Ascending aorta (tissue), 2 donors: ENCODE measurements at regions of chr15 and their contacts with region 1.

Region 1: DNA sequence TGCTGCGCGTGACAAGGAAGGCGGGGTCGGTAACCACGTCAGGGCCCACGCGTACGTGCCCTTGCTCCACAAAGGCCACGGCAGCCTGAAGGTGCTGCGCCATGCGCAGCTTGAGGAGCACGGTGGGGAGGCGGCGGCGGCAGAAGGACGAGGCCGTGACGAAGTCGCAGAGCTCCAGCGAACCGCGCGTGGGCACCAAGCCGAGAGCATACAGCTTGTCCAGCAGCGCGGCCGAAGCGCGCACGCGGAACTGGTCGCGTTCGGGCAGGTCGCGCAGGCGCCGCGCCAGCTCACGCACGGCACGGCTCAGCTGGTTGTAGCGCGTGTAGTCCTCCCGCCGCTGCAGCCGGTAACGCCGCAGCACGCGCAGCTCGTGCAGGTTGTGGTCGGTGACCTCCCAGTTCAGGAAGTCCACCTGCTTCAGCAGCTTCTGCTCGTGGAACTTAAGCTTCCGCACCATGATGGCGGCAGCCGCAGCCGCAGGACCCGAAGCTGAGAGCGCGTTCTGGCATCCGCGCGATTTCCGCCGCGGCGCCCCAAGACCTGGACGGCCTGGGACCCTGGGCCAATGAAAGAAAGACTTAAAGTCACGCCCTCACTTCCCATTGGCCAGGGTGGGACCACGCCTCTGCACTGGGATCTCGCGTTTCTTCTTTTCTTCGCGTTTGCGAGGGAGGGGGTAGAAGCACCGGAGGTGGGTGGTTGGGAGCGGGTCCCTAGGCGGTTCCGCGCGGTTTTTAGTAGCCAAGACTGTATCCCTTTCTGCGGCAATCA is at the start of gene IMP3:
- DNase-seq: peak; percentile 84 to 97
- H3K4me3 ChIP-seq: peak within 1 kb of the TSS; percentile 82 to 94
- H3K27ac ChIP-seq: peak within 1 kb of the TSS; percentile 88 to 95
- H3K4me1 ChIP-seq: peaks cover 9 to 32% of the 10 kb centered on the region in 2 donors
- H3K27me3 ChIP-seq: no peaks in the 10 kb centered on the region
- CTCF ChIP-seq: no peak
- total RNA-seq, gene IMP3: 159 TPM

Region 2: GRCh38 chr15:74826364-74826819 is 813.5 kb before region 1 on chr15 and contains the start of gene CPLX3:
- intact Hi-C with region 1: no loop called
- DNase-seq: no peak
- H3K4me3 ChIP-seq: no peak within 1 kb of the TSS
- H3K27ac ChIP-seq: no peak within 1 kb of the TSS
- H3K4me1 ChIP-seq: no peaks in the 10 kb centered on the region
- H3K27me3 ChIP-seq: peaks cover 10% of the 10 kb centered on the region
- CTCF ChIP-seq: no peak
- total RNA-seq, gene CPLX3: not detected

Region 3: GRCh38 chr15:75661091-75661777 is 21.3 kb after region 1 on chr15:
- intact Hi-C with region 1: loop called (anchors 1 kb)
- DNase-seq: peak; percentile 66 to 96
- H3K4me3 ChIP-seq: peak overlapping the region in 1 of 2 donors; percentile 42
- H3K27ac ChIP-seq: peak overlapping the region; percentile 95 to 97
- H3K4me1 ChIP-seq: peaks cover 16 to 51% of the 10 kb centered on the region in 2 donors
- H3K27me3 ChIP-seq: no peaks in the 10 kb centered on the region
- CTCF ChIP-seq: no peak

Region 4: DNA sequence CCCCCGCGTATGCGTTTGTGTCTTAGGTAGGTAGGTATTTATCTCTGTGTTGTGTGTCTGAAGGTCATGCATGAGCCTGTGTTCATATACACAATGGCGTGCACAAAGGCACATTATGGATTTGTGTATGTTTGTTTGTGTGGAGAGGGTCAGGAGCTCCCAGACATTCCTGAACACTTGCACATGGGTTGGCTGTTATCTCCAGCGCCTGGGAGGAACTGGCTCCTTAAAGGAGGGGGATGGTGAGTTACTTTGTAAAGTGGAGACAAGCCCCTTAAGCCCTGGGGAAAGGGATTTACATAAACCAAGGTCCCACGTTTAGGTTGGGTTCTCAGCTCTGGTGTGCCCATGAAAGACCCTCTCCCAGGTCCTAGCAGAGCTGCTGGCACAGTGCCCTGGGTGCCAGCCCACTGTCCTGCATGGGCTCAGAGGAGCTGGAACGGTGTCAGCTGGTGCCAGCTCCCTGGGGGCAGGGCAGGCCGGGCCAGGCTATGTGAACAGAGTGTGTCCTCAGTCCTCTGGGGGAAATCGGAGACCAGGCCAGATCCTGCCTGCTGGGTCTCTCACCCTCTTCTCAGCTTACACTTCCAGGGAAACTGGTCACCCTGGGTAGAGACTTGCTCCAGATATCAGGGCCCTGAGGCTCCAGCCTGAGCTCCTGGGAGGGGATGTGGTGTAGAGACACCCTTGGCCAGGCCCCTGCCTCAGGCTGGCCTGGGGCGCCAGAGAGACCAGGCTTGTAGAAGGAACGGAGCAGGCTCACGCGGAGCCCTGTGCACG is 32.9 kb after region 1 on chr15:
- intact Hi-C with region 1: loop called (anchors 5 kb)
- DNase-seq: peak in 1 of 2 donors; percentile 85
- H3K4me3 ChIP-seq: peak overlapping the region in 1 of 2 donors; percentile 33
- H3K27ac ChIP-seq: peak overlapping the region; percentile 95 to 97
- H3K4me1 ChIP-seq: peaks cover 28 to 70% of the 10 kb centered on the region in 2 donors
- H3K27me3 ChIP-seq: no peaks in the 10 kb centered on the region
- CTCF ChIP-seq: no peak

Region 5: DNA sequence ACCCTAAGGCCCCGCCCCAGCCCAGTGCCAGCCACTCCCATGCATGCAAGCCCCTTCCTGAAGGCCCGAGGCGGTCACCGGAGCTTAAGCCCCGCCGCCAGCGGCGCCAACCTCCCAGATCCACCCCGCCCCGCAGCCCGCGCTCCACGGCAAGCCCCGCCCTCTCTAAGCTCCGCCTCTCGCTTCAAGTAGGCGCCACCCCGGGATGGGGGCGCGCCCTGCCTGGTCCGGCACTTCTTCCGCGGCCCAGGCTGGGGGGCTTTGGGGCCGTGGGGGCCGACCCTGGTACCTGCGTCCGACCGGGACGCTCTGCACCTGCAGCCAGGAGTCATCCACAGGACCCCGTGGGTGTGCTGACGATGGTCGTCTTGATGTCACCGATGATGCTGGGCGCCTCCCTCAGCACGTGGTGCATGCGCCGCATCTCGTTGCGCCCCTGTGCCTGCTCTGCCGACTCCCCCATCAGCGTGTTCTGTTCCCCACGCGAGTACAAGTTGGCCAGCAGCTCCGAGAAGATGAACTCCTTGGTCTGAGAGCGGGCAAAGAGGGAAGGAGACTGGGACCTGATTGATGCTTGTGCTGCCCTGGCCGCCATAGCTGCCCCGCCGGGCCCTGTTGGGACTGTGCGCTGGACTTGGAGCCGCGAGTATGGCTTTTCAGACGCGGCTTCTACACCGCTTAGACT is 98.9 kb after region 1 on chr15:
- intact Hi-C with region 1: loop called (anchors 1 kb)
- DNase-seq: peak; percentile 82 to 97
- H3K4me3 ChIP-seq: peak overlapping the region; percentile 90 to 97
- H3K27ac ChIP-seq: peak overlapping the region; percentile 29 to 63
- H3K4me1 ChIP-seq: peaks cover 0 to 10% of the 10 kb centered on the region in 2 donors
- H3K27me3 ChIP-seq: no peaks in the 10 kb centered on the region
- CTCF ChIP-seq: no peak